ENCODE measurements at regions of chr12 and their contacts with region 1.

Region 1: GRCh38 chr12:132593521-132594358 is 16.6 kb downstream of the LRCOL1 start:
- DNase-seq: peak; percentile 92 to 95 (median 93)
- ATAC-seq: peak; percentile 94 to 98
- H3K4me3 ChIP-seq: no peak overlapping the region
- H3K27ac ChIP-seq: no peak overlapping the region
- H3K4me1 ChIP-seq: peaks cover 2% of the 10 kb centered on the region
- H3K27me3 ChIP-seq: no peaks in the 10 kb centered on the region

Region 2: DNA sequence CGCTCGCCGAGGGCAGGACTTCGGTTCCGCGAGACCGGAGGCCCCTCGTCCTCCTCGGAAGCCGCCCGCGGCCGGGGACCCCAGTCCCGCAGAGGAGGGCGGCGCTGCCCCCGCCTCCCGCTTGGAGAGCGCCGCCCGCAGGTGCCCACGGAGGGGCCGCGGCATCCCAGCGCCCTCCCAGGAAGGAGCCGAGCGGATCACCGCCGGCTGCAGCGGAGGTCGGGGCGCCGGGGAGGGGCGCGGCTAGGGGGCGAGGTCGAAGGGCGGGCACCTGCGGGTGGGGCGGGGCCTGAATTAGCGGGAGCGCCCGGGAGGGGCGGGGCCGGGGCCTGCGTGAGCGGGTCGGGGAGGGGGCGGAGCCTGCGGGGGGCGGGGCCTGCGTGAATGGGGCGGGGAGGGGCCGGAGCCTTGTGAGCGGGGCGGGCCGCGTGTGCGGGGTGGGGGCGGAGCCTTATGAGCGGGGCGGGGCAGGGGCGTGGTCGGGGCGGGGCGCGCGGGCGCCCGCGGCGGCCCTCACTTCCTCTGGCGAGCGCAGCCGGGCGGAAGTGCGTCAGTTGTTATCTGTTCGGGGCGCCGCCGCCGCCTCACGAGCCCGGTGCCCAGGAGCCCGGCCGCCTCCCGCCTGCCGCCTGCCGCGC is 104.0 kb before region 1 on chr12 and contains the start of gene FBRSL1:
- intact Hi-C with region 1: loop called in 1 of 4 experiments (anchors 10 kb)
- DNase-seq: peak; percentile 93 to 97 (median 96)
- ATAC-seq: peak; percentile 80 to 87
- H3K4me3 ChIP-seq: peak within 1 kb of the TSS; percentile 92
- H3K27ac ChIP-seq: peak within 1 kb of the TSS; percentile 54
- H3K4me1 ChIP-seq: peaks cover 10% of the 10 kb centered on the region
- H3K27me3 ChIP-seq: no peaks in the 10 kb centered on the region
- total RNA-seq, gene FBRSL1: 50.4 to 65.0 (median 54.7) TPM

Region 3: GRCh38 chr12:132687208-132688164 is 93.7 kb after region 1 on chr12 and contains the starts of genes POLE and PXMP2:
- intact Hi-C with region 1: no loop called
- DNase-seq: peak; percentile 96 to 99 (median 99)
- ATAC-seq: peak; percentile 99
- H3K4me3 ChIP-seq: peak within 1 kb of the TSS; percentile 94
- H3K27ac ChIP-seq: peak within 1 kb of the TSS; percentile 82
- H3K4me1 ChIP-seq: no peaks in the 10 kb centered on the region
- H3K27me3 ChIP-seq: no peaks in the 10 kb centered on the region
- total RNA-seq, gene POLE: 13.0 to 22.1 (median 15.8) TPM
- total RNA-seq, gene PXMP2: 21.6 to 40.1 (median 36.3) TPM